HEK293 (cell line): ENCODE measurements at regions of chr19 and their contacts with region 1.

Region 1: GRCh38 chr19:34974646-34975045 is 10.6 kb upstream of the ZNF792 start:
- H3K4me3 ChIP-seq: no peak overlapping the region
- H3K27ac ChIP-seq: no peak overlapping the region
- H3K4me1 ChIP-seq: no peaks in the 10 kb centered on the region; the same call in 1 of the 2 replicates
- CTCF ChIP-seq: no peak

Region 2: DNA sequence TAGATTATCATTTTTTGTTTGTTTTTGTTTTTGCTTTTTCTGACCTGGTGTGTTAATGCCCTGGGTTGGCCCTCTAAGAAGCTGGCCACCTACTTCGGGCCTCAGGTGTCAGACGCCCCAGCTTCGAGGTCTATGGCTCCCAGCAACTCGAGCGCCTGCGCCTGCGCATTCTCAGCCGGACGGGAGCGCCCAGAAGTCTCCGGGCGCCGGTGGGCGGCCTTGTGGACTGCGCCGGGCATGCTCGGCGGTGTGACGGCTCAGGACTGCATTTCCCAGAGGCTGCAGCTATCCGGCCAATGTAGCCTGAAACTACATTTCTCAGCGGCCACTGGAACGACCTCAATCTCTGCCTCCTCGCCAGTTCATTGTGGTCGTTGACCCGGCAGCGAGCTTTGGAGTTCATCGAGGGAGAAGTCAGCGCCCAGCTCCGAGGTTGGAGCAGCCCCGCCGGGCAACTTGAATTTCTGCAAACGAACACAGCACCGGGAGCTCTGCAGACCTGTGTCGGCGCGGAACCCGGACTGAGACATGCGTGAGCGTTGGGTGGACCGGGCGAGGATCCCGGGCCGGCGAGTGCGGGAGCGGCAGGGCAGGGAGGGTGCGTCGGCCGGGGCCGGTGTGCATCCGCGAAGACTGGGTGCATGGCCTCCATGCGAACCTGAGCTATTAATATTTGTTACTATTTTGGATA is 47.8 kb before region 1 on chr19 and contains the start of gene ZNF30:
- CTCF ChIA-PET with region 1: interaction called, 14 read pairs
- POLR2A ChIA-PET with region 1: no interaction called
- H3K4me3 ChIP-seq: peak within 1 kb of the TSS; percentile 51
- H3K27ac ChIP-seq: peak within 1 kb of the TSS; percentile 95
- H3K4me1 ChIP-seq: peaks cover 10% of the 10 kb centered on the region
- CTCF ChIP-seq: 0 out of 2 replicates have a peak, but pooled peaks have one; percentile 45

Region 3: GRCh38 chr19:34985249-34986022 is 10.8 kb after region 1 on chr19:
- CTCF ChIA-PET with region 1: interaction called, 53 read pairs
- POLR2A ChIA-PET with region 1: no interaction called
- H3K4me3 ChIP-seq: no peak overlapping the region
- H3K27ac ChIP-seq: no peak overlapping the region
- H3K4me1 ChIP-seq: no peaks in the 10 kb centered on the region
- CTCF ChIP-seq: no peak

Region 4: GRCh38 chr19:35006342-35007018 is 31.8 kb after region 1 on chr19:
- CTCF ChIA-PET with region 1: interaction called, 96 read pairs
- POLR2A ChIA-PET with region 1: interaction called, 3 read pairs
- H3K4me3 ChIP-seq: no peak overlapping the region
- H3K27ac ChIP-seq: no peak overlapping the region
- H3K4me1 ChIP-seq: peaks cover 17% of the 10 kb centered on the region
- CTCF ChIP-seq: no peak

Region 5: DNA sequence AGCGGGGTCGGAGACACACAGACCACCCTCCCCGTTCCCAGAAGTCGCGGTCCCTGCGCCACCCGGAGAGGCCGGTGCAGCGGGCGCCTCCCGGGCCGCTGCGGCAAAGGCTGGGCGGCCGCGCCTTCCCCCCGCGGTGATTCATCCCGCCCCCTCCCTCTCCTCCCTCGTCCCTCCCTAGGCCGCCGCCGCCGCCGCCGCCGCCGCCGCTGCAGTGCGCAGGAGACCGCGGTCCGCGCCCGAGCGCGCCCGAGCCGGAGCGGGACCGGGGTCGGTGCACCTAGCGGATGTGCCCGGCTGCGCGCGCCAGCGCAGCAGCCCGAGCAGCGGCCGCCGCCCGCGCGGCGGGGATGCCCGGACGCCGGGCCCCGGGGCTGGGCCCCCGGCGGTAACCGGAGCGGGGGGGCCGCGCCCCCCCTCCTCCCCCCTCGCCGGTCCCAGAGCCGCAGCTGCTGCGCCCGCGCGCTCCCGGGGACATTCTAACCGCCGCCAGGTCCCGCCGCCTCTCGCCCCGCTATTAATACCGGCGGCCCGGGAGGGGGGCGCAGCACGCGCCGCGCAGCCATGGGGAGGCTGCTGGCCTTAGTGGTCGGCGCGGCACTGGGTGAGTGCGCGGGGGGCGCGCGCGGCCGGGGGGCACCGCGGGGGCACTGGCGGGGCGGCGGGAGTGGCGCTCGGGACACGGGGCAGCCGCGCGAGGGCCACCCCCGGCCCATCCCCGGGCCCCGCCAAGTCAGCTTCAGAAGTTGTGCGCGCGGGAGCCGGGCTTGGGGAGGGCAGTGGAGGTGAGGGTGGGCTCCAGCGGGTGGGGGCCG is 55.8 kb after region 1 on chr19 and contains the start of gene SCN1B:
- CTCF ChIA-PET with region 1: interaction called, 12 read pairs
- POLR2A ChIA-PET with region 1: interaction called, 3 read pairs
- H3K4me3 ChIP-seq: peak within 1 kb of the TSS; percentile 42
- H3K27ac ChIP-seq: peak within 1 kb of the TSS; percentile 74; the same call in 1 of the 2 replicates
- H3K4me1 ChIP-seq: peaks cover 14% of the 10 kb centered on the region
- CTCF ChIP-seq: no peak

Region 6: GRCh38 chr19:35090506-35091237 is 116.0 kb after region 1 on chr19:
- CTCF ChIA-PET with region 1: interaction called, 16 read pairs
- POLR2A ChIA-PET with region 1: no interaction called
- H3K4me3 ChIP-seq: no peak overlapping the region
- H3K27ac ChIP-seq: no peak overlapping the region; the same call in 1 of the 2 replicates
- H3K4me1 ChIP-seq: peaks cover 7% of the 10 kb centered on the region
- CTCF ChIP-seq: peak; percentile 86